ENCODE measurements at regions of chr9 and their contacts with region 1.

Region 1: GRCh38 chr9:14652729-14653377 is 40.4 kb downstream of the ZDHHC21 start:
- DNase-seq: no peak
- H3K4me3 ChIP-seq: no peak overlapping the region
- H3K27ac ChIP-seq: no peak overlapping the region
- H3K27me3 ChIP-seq: no peaks in the 10 kb centered on the region
- CTCF ChIP-seq: peak; percentile 27 to 81 (median 61)

Region 2: DNA sequence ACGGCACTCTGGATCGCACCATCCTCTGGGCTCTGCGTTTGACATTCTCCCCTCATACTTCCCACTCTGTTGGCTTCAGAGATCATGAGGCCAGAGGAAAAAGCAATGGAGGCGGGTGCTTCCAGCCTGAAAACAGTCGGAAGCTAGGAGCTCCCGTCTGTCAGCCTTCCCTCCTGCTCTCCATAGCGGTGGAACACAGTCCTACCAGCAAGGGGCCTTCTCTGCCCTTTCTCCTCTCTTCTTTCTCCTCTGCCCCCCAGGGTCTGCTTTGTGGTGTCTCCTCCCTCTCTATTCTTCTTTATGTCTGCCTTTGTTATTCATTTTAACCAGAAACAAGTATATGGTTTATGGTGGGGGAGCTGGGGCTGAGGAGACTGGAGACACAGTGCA is 186.4 kb before region 1 on chr9:
- intact Hi-C with region 1: loop called in 1 of 2 experiments (anchors 5 kb)
- DNase-seq: no peak
- H3K4me3 ChIP-seq: no peak overlapping the region
- H3K27ac ChIP-seq: no peak overlapping the region
- H3K27me3 ChIP-seq: peaks cover 0 to 3% (median 0%) of the 10 kb centered on the region in 45 donors
- CTCF ChIP-seq: no peak